ENCODE measurements at regions of chr9 and their contacts with region 1.

Region 1: GRCh38 chr9:120336021-120336752 is 243.8 kb downstream of the CDK5RAP2 start:
- DNase-seq: peak; percentile 35
- ATAC-seq: peak; percentile 97
- H3K4me3 Mint-ChIP-seq: no peak overlapping the region
- H3K27ac Mint-ChIP-seq: no peak overlapping the region
- H3K4me1 Mint-ChIP-seq: peaks cover 10% of the 10 kb centered on the region
- H3K27me3 Mint-ChIP-seq: peaks cover 14% of the 10 kb centered on the region

Region 2: GRCh38 chr9:120394058-120394669 is 58.0 kb after region 1 on chr9:
- CTCF ChIA-PET with region 1: no interaction called
- POLR2A ChIA-PET with region 1: no interaction called
- intact Hi-C with region 1: loop called in 1 of 2 experiments (anchors 1 kb)
- DNase-seq: peak; percentile 79
- ATAC-seq: peak; percentile 95
- H3K4me3 Mint-ChIP-seq: peak overlapping the region; percentile 22
- H3K27ac Mint-ChIP-seq: peak overlapping the region; percentile 82
- H3K4me1 Mint-ChIP-seq: peaks cover 32% of the 10 kb centered on the region
- H3K27me3 Mint-ChIP-seq: no peaks in the 10 kb centered on the region

Measured in activated CD4-positive, alpha-beta T cell treated with anti-CD3 and anti-CD28 coated beads for 36 hours (primary cell).